ENCODE measurements at regions of chr17 and their contacts with region 1.

Region 1: GRCh38 chr17:12365805-12366204 is 299.9 kb upstream of the MYOCD start:
- DNase-seq: peak; percentile 72 to 93
- H3K4me3 ChIP-seq: no peak overlapping the region
- H3K27ac ChIP-seq: peak overlapping the region; percentile 87 to 94
- H3K4me1 ChIP-seq: peaks cover 0 to 33% of the 10 kb centered on the region in 2 donors
- H3K27me3 ChIP-seq: no peaks in the 10 kb centered on the region
- CTCF ChIP-seq: no peak

Region 2: DNA sequence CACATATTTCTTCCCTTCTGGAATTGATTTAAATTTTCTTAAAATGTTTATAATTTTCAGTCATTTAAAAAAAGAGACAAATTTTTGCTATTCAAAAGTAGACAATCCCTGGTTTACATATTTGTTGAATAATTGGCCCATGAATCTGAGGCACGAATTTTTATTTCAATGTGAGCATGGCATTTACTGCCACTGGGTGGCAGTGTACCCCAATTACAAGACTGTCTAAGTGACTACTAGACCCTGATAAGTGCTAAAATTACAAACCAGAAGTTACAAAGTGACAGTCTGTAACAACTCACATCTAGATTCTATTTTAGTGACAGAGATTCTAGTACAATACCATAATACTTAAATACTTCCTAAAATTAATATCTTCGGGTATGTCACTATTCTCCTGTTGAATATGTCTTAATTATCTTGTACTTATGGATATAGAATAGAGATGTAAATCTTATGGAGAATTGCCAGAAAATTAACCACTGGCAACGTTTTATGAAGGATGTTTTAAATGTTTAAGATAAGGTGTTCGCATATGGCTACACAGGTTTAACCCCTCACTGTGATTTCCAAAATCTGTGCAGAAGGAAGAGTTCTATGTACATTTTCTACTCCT is 109.3 kb before region 1 on chr17:
- intact Hi-C with region 1: loop called (anchors 5 kb)
- DNase-seq: peak in 1 of 2 donors; percentile 70
- H3K4me3 ChIP-seq: peak overlapping the region in 1 of 2 donors; percentile 0
- H3K27ac ChIP-seq: no peak overlapping the region
- H3K4me1 ChIP-seq: peaks cover 0 to 10% of the 10 kb centered on the region in 2 donors
- H3K27me3 ChIP-seq: no peaks in the 10 kb centered on the region
- CTCF ChIP-seq: peak; percentile 62 to 87 (median 82)

Region 3: DNA sequence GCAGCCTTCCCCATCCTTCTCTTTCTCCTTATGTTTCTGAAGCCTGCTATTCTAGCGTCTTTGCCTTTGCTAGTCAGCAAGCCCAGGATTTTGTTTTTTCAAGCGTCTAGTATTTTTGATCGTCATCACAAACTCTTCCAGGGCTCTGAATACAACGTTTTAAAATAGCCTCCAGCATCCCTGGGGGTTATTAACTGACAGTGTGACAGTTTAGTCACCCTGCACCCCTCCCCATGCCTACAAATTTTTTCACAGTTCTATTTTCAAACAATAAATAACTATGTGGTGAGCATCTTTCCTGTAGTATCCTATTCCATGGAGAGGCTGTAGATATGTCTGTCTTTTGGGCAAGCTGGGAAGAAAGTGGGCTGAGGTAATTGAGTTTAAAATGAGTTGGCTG is 64.3 kb before region 1 on chr17:
- intact Hi-C with region 1: loop called (anchors 5 kb)
- DNase-seq: no peak
- H3K4me3 ChIP-seq: no peak overlapping the region
- H3K27ac ChIP-seq: peak overlapping the region; percentile 74 to 81
- H3K4me1 ChIP-seq: peaks cover 0 to 8% of the 10 kb centered on the region in 2 donors
- H3K27me3 ChIP-seq: no peaks in the 10 kb centered on the region
- CTCF ChIP-seq: no peak

Region 4: GRCh38 chr17:12403881-12404394 is 38.1 kb after region 1 on chr17:
- intact Hi-C with region 1: loop called (anchors 2 kb)
- DNase-seq: no peak
- H3K4me3 ChIP-seq: no peak overlapping the region
- H3K27ac ChIP-seq: peak overlapping the region in 1 of 2 donors; percentile 62
- H3K4me1 ChIP-seq: peaks cover 6 to 15% of the 10 kb centered on the region in 2 donors
- H3K27me3 ChIP-seq: no peaks in the 10 kb centered on the region
- CTCF ChIP-seq: no peak

Region 5: GRCh38 chr17:12545877-12546513 is 180.2 kb after region 1 on chr17:
- intact Hi-C with region 1: loop called (anchors 5 kb)
- DNase-seq: no peak
- H3K4me3 ChIP-seq: no peak overlapping the region
- H3K27ac ChIP-seq: no peak overlapping the region
- H3K4me1 ChIP-seq: peaks cover 0 to 5% of the 10 kb centered on the region in 2 donors
- H3K27me3 ChIP-seq: no peaks in the 10 kb centered on the region
- CTCF ChIP-seq: peak; percentile 59 to 84 (median 78)

Region 6: GRCh38 chr17:12667299-12667958 is 301.6 kb after region 1 on chr17:
- intact Hi-C with region 1: loop called (anchors 2 kb)
- DNase-seq: peak in 1 of 2 donors; percentile 81
- H3K4me3 ChIP-seq: peak overlapping the region; percentile 80 to 84
- H3K27ac ChIP-seq: peak overlapping the region; percentile 93 to 98
- H3K4me1 ChIP-seq: peaks cover 0 to 15% of the 10 kb centered on the region in 2 donors
- H3K27me3 ChIP-seq: no peaks in the 10 kb centered on the region
- CTCF ChIP-seq: peak; percentile 53 to 74 (median 62)

Measured in ascending aorta (tissue), 2 donors.